GM12878 (cell line): ENCODE measurements at regions of chr5 and their contacts with region 1.

Region 1: GRCh38 chr5:78648359-78649210 is at the start of gene LHFPL2:
- DNase-seq: no peak
- ATAC-seq: peak; percentile 66
- H3K4me3 ChIP-seq: peak within 1 kb of the TSS; percentile 76
- H3K27ac ChIP-seq: peak within 1 kb of the TSS; percentile 78
- H3K4me1 ChIP-seq: peaks cover 19% of the 10 kb centered on the region
- H3K27me3 ChIP-seq: no peaks in the 10 kb centered on the region
- CTCF ChIP-seq: no peak
- EP300 ChIP-seq: no peak
- POLR2A ChIP-seq: peak; percentile 62
- RAD21 ChIP-seq: 0 out of 2 replicates have a peak, but pooled peaks have one; percentile 14
- polyA plus RNA-seq, gene LHFPL2: 4.1 to 4.5 TPM

Region 2: DNA sequence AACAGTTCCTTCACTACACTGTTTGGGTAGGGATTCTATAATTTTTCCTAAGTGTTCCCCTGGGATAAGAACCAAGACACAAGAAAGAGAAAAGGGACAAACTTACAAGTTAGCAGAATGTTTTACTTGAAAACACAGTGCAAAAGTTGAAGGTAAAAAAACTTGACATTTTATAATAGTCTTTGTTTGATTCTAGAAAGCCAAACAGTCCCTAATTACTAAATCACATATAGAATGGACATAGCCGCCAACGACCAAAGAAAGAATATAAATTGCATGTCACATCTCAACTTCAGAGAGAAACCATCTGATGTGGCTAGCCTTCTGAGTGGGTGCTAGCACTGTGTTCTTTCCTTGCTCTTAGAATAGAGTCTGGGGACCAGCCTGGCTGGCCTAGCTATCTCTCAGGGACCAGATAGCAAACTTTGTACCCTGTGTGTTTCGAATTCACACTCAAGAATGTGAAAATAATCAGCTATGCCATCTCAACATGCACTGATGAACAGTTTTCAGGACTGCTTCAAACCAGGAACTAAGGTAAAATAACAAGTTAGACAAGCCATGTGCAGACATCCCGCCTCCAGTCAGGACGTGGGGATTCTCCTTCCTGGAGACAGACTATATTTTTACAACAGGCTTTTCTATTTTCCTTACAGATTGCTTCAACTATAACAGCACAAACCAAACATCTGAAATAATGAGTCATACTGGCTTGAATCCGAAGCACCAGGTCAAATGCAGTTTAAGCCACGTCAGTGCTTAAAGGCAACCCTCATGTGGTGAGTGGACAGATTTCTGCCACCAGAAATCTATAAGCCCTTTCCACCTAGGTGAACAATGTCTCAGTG is 53.8 kb before region 1 on chr5:
- CTCF ChIA-PET with region 1: interaction called, 3 read pairs
- POLR2A ChIA-PET with region 1: interaction called, 4 read pairs
- RAD21 ChIA-PET with region 1: interaction called, 4 read pairs
- SMC1A ChIA-PET with region 1: interaction called, 14 read pairs
- in situ Hi-C with region 1: no loop called
- intact Hi-C with region 1: no loop called
- DNase-seq: no peak
- ATAC-seq: peak; percentile 44
- H3K4me3 ChIP-seq: no peak overlapping the region
- H3K27ac ChIP-seq: no peak overlapping the region; the same call in 1 of the 2 replicates
- H3K4me1 ChIP-seq: peaks cover 26% of the 10 kb centered on the region
- H3K27me3 ChIP-seq: no peaks in the 10 kb centered on the region
- CTCF ChIP-seq: no peak
- EP300 ChIP-seq: no peak
- POLR2A ChIP-seq: no peak
- RAD21 ChIP-seq: no peak

Region 3: DNA sequence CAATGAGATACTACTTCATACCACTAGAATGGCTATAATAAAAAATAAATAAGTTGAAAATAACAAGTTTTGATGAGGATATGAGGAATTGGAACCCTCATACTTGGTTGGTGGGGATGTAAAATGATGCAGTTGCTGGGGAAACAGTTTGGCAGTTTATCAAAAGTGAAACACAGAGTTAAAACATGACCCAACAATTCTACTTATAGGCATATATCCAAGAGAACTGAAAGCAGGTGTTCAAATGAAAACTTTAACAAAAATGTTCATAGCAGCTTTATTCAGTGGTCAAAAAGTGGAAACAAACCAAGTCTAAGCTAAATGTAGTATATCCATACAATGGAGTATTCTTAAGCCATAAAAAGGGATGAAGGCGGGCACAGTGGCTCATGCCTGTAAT is 13.1 kb after region 1 on chr5:
- CTCF ChIA-PET with region 1: no interaction called
- POLR2A ChIA-PET with region 1: interaction called, 3 read pairs
- RAD21 ChIA-PET with region 1: interaction called, 4 read pairs
- SMC1A ChIA-PET with region 1: interaction called, 10 read pairs
- in situ Hi-C with region 1: no loop called
- intact Hi-C with region 1: no loop called
- DNase-seq: peak; percentile 32
- ATAC-seq: peak; percentile 93
- H3K4me3 ChIP-seq: no peak overlapping the region
- H3K27ac ChIP-seq: peak overlapping the region; percentile 61
- H3K4me1 ChIP-seq: peaks cover 12% of the 10 kb centered on the region
- H3K27me3 ChIP-seq: no peaks in the 10 kb centered on the region
- CTCF ChIP-seq: no peak
- EP300 ChIP-seq: peak in 1 of 2 experiments; percentile 47; a peak in 1 of 4 replicates
- POLR2A ChIP-seq: no peak
- RAD21 ChIP-seq: no peak

Region 4: GRCh38 chr5:78886341-78887230 is 238.0 kb after region 1 on chr5:
- CTCF ChIA-PET with region 1: interaction called, 4 read pairs
- POLR2A ChIA-PET with region 1: no interaction called
- RAD21 ChIA-PET with region 1: interaction called, 5 read pairs
- SMC1A ChIA-PET with region 1: no interaction called
- in situ Hi-C with region 1: no loop called
- intact Hi-C with region 1: loop called (anchors 5 kb)
- DNase-seq: no peak
- ATAC-seq: peak; percentile 25
- H3K4me3 ChIP-seq: no peak overlapping the region
- H3K27ac ChIP-seq: no peak overlapping the region
- H3K4me1 ChIP-seq: peaks cover 21% of the 10 kb centered on the region
- H3K27me3 ChIP-seq: no peaks in the 10 kb centered on the region; a peak in 1 of 4 replicates
- CTCF ChIP-seq: peak; percentile 37 to 52 (median 38); a peak in 5 of 6 replicates
- EP300 ChIP-seq: no peak
- POLR2A ChIP-seq: no peak
- RAD21 ChIP-seq: peak; percentile 51